ENCODE measurements at regions of chr9 and their contacts with region 1.

Region 1: GRCh38 chr9:129270903-129271431 is 92.9 kb upstream of the IER5L start:
- DNase-seq: no peak
- H3K4me3 ChIP-seq: no peak overlapping the region
- H3K27ac ChIP-seq: no peak overlapping the region
- H3K4me1 ChIP-seq: peaks cover 0 to 3% (median 0%) of the 10 kb centered on the region in 4 donors
- H3K27me3 ChIP-seq: no peaks in the 10 kb centered on the region
- CTCF ChIP-seq: no peak

Region 2: DNA sequence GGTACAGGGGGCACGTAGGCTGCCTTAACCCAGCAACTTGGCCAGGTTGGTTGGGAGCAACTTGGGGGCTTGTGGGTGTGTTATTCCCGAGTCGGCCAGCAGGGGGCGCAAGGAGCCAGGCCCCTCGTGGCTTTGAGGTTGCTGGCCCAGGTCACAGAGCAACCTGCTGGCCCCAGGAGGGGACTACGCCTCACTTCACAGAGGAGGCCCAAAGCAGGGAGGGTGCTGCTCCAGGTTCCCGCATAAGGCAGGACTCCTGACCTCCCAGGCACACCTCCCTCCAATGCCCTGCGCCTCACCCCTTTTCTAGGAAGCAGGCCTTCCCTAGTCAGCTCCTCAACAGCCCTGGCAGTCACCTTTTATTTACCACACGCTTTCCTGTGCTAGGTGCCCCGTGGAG is 407.3 kb before region 1 on chr9:
- intact Hi-C with region 1: no loop called
- DNase-seq: peak; percentile 51 to 84
- H3K4me3 ChIP-seq: no peak overlapping the region
- H3K27ac ChIP-seq: peak overlapping the region; percentile 2 to 18
- H3K4me1 ChIP-seq: peaks cover 0 to 36% (median 23%) of the 10 kb centered on the region in 4 donors
- H3K27me3 ChIP-seq: no peaks in the 10 kb centered on the region
- CTCF ChIP-seq: peak; percentile 93 to 96

Region 3: DNA sequence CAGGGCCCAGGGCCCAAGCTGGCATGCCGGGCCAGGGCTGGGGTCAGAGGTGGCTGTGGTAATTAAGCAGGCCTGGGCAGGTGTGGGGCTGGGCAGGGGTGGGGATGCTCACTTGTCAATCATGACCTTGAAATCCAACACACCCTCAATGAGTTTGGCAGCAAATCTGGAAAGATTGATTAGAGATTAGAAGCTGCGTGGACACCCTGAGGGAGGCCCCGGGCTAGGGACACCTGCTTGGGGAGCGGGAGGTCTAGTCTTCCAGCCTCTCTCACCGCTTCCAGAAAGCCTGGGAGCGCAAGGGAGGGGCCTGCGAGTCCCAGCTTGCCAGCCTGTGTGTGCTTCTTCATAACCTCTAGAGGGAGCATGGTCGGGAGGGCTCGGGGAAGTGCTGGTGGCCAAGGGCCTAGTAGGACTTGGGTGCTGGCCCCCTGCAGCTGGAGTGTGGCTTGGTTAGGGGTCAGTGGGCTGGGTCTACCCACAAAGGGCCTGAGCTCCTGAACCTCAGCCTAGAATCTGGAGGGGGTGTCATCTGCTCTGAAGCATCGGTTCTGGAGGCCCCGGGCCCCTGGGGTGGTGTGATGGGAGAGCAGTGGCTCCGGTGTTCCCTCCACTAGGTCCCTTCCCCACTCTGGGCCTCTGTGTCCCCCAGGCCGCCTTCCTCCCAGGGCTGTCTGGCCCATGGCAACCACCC is 167.9 kb before region 1 on chr9:
- intact Hi-C with region 1: no loop called
- DNase-seq: no peak
- H3K4me3 ChIP-seq: no peak overlapping the region
- H3K27ac ChIP-seq: no peak overlapping the region
- H3K4me1 ChIP-seq: peaks cover 0 to 1% (median under 1%) of the 10 kb centered on the region in 4 donors
- H3K27me3 ChIP-seq: no peaks in the 10 kb centered on the region
- CTCF ChIP-seq: peak; percentile 16 to 34

Region 4: GRCh38 chr9:129343424-129344375 is 72.7 kb after region 1 on chr9:
- intact Hi-C with region 1: loop called (anchors 2 kb)
- DNase-seq: peak; percentile 81
- H3K4me3 ChIP-seq: no peak overlapping the region
- H3K27ac ChIP-seq: peak overlapping the region in 1 of 2 donors; percentile 47
- H3K4me1 ChIP-seq: peaks cover 0 to 15% (median 9%) of the 10 kb centered on the region in 4 donors
- H3K27me3 ChIP-seq: no peaks in the 10 kb centered on the region
- CTCF ChIP-seq: no peak

Measured in tibial artery (tissue), 4 donors.